ENCODE measurements at regions of chr6 and their contacts with region 1.

Region 1: GRCh38 chr6:99746261-99746895 is 139.7 kb downstream of the PRDM13 start:
- DNase-seq: peak; percentile 76
- ATAC-seq: peak; percentile 89
- H3K4me3 ChIP-seq: no peak overlapping the region
- H3K27ac ChIP-seq: no peak overlapping the region
- H3K4me1 ChIP-seq: peaks cover 0 to 8% of the 10 kb centered on the region in 2 experiments; a peak in 2 of 4 replicates
- H3K27me3 ChIP-seq: no peaks in the 10 kb centered on the region
- CTCF ChIP-seq: peak; percentile 55 to 83 (median 69); a peak in 5 of 6 replicates
- POLR2A ChIP-seq: no peak
- RAD21 ChIP-seq: peak; percentile 81

Region 2: DNA sequence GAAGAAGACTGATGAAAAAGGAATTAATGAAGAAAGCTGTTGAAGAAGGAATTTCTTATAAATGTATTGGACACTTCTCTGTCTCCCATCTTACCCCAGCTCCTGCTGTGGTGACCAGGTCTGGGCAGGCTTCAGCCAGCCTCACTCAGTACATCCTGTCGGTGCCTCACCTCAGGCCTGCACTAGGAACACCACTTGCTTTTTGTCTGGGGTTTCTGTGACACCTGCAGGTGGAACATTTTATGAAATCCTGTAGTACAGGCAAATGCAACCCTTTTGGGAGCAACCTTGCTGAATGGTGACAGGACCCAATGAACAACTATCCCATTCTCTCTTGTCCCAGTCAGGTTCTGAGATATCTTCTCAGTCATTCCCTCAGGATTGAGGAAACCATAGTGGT is 10.1 kb before region 1 on chr6:
- CTCF ChIA-PET with region 1: interaction called, 11 read pairs
- POLR2A ChIA-PET with region 1: no interaction called
- RAD21 ChIA-PET with region 1: no interaction called
- intact Hi-C with region 1: no loop called
- DNase-seq: peak; percentile 10
- ATAC-seq: peak; percentile 67
- H3K4me3 ChIP-seq: no peak overlapping the region
- H3K27ac ChIP-seq: no peak overlapping the region
- H3K4me1 ChIP-seq: no peaks in the 10 kb centered on the region
- H3K27me3 ChIP-seq: no peaks in the 10 kb centered on the region
- CTCF ChIP-seq: no peak
- POLR2A ChIP-seq: no peak
- RAD21 ChIP-seq: peak; percentile 54

Region 3: DNA sequence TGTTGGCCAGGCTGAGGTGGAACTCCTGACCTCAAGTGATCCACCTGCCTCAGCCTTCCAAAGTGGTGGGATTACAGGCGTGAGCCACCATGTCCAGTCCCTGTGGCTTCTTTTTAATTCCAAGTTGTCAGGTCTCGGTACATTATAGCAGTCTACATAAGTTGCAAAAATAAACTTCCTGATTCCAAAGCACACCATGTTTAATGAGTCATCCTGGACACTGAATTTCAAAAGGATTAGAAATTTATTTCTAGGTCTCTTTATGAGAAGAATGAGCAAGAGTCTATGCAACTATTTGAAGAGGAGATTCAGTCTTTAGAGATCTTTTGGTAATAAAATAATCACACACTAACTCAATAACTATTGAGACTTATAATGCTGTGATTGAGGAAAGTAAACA is 311.6 kb after region 1 on chr6:
- CTCF ChIA-PET with region 1: no interaction called
- POLR2A ChIA-PET with region 1: no interaction called
- RAD21 ChIA-PET with region 1: no interaction called
- intact Hi-C with region 1: no loop called
- DNase-seq: no peak
- ATAC-seq: no peak
- H3K4me3 ChIP-seq: no peak overlapping the region
- H3K27ac ChIP-seq: no peak overlapping the region
- H3K4me1 ChIP-seq: no peaks in the 10 kb centered on the region
- H3K27me3 ChIP-seq: no peaks in the 10 kb centered on the region
- CTCF ChIP-seq: no peak
- POLR2A ChIP-seq: no peak
- RAD21 ChIP-seq: no peak

Measured in HCT116 (cell line).